Activated T-helper 2 cell treated with anti-CD3 and anti-CD28 coated beads, Interferon-gamma antibody, Interleukin-2, Interleukin-4, amounts not matched to agents 10 μg/mL and 5 μg/mL and 100 μg/mL, durations not matched to agents 14 hours and 24 hours and 36 hours (primary cell): ENCODE measurements at regions of chr9 and their contacts with region 1.

Region 1: DNA sequence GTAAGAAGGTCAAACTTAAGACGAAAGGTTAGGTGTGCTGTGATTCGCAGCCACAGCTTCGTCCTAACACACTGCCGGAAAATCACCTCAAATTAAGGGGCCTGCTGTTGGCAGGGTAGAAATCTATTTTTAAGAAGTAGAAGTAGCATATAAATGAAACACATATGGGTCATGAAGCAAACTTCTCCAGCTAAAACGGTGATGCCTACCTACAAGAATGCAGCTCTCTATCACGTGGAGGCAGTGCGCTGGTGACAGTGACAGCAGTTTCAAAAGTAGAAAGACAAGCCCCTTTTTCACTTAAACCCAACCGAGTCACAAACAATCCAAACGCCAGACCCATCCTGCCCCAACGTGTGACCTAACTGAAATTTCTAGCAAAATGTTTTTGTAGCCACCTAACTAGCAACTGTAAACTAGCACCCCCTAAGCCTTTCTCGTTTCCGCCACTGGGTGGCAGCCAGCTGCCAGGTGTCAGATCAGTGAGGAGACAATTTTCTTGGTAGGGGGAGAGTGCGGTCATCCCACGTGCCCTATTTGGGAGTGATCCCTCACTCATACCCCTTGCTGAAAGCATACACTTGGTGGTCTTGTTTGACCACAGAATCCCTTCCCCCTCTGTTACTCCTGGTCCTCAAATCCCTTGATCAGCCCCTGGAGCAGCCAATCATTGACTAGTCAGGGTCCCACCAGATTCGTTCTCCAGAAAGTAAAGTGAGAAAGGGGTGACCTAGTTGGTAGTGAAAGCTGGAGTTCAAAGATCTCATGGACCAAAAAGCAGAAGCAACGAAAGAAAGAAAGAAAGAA is 71.8 kb upstream of the MAMDC2 start:
- DNase-seq: peak; percentile 22
- H3K4me3 Mint-ChIP-seq: no peak overlapping the region
- H3K27ac Mint-ChIP-seq: no peak overlapping the region
- H3K4me1 Mint-ChIP-seq: no peaks in the 10 kb centered on the region
- H3K27me3 Mint-ChIP-seq: peaks cover 4% of the 10 kb centered on the region

Region 2: DNA sequence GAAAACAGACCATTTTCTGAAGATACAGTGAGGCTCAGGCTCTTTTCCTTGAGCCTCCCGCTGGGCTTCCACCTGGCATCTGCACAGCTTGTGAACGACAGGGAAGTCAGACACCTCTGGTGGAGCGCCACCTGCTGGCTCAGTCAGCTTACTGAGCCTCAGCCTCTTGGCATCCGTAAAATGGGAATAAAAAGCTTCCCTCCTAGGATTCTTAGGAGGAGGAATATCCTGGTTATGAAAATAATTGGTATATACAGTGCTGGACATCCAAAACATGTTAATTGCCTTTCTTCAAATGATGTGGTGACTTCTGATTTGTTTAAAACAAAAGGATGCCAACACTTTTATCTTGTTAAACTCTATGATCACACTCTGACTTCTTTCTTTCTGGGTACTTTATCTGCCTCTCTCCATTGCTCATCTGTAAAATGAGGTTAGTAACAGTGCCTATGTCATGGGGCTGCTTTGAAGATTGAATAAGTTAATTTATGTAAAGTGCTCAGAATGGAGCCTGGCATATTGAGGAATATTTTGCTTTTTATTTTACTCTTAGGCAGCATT is 139.3 kb after region 1 on chr9:
- intact Hi-C with region 1: loop called (anchors 1 kb)
- DNase-seq: no peak
- H3K4me3 Mint-ChIP-seq: no peak overlapping the region
- H3K27ac Mint-ChIP-seq: no peak overlapping the region
- H3K4me1 Mint-ChIP-seq: peaks cover 4% of the 10 kb centered on the region
- H3K27me3 Mint-ChIP-seq: peaks cover 12% of the 10 kb centered on the region

Region 3: GRCh38 chr9:70229579-70229978 is 257.7 kb after region 1 on chr9:
- intact Hi-C with region 1: loop called (anchors 10 kb)
- DNase-seq: no peak
- H3K4me3 Mint-ChIP-seq: no peak overlapping the region
- H3K27ac Mint-ChIP-seq: no peak overlapping the region
- H3K4me1 Mint-ChIP-seq: no peaks in the 10 kb centered on the region
- H3K27me3 Mint-ChIP-seq: peaks cover 3% of the 10 kb centered on the region

Region 4: GRCh38 chr9:70602321-70603019 is 630.6 kb after region 1 on chr9:
- intact Hi-C with region 1: loop called (anchors 10 kb)
- DNase-seq: peak; percentile 14
- H3K4me3 Mint-ChIP-seq: no peak overlapping the region
- H3K27ac Mint-ChIP-seq: no peak overlapping the region
- H3K4me1 Mint-ChIP-seq: peaks cover 1% of the 10 kb centered on the region
- H3K27me3 Mint-ChIP-seq: no peaks in the 10 kb centered on the region